ENCODE measurements at regions of chr5 and their contacts with region 1.

Region 1: GRCh38 chr5:170791325-170791954 is 7.9 kb downstream of the GABRP start:
- DNase-seq: peak; percentile 65
- H3K4me3 ChIP-seq: no peak overlapping the region
- H3K27ac ChIP-seq: no peak overlapping the region
- H3K4me1 ChIP-seq: no peaks in the 10 kb centered on the region
- H3K27me3 ChIP-seq: no peaks in the 10 kb centered on the region
- CTCF ChIP-seq: peak; percentile 33 to 69 (median 54)
- EP300 ChIP-seq: no peak
- POLR2A ChIP-seq: no peak

Region 2: GRCh38 chr5:170747851-170748250 is 43.6 kb before region 1 on chr5:
- in situ Hi-C with region 1: loop called in 1 of 4 experiments (anchors 10 kb)
- intact Hi-C with region 1: loop called (anchors 5 kb)
- DNase-seq: no peak
- H3K4me3 ChIP-seq: no peak overlapping the region
- H3K27ac ChIP-seq: no peak overlapping the region
- H3K4me1 ChIP-seq: peaks cover 10 to 47% (median 18%) of the 10 kb centered on the region in 4 donors
- H3K27me3 ChIP-seq: peaks cover 15% of the 10 kb centered on the region
- CTCF ChIP-seq: peak in 1 of 5 experiments; percentile 21
- EP300 ChIP-seq: no peak
- POLR2A ChIP-seq: no peak

Region 3: DNA sequence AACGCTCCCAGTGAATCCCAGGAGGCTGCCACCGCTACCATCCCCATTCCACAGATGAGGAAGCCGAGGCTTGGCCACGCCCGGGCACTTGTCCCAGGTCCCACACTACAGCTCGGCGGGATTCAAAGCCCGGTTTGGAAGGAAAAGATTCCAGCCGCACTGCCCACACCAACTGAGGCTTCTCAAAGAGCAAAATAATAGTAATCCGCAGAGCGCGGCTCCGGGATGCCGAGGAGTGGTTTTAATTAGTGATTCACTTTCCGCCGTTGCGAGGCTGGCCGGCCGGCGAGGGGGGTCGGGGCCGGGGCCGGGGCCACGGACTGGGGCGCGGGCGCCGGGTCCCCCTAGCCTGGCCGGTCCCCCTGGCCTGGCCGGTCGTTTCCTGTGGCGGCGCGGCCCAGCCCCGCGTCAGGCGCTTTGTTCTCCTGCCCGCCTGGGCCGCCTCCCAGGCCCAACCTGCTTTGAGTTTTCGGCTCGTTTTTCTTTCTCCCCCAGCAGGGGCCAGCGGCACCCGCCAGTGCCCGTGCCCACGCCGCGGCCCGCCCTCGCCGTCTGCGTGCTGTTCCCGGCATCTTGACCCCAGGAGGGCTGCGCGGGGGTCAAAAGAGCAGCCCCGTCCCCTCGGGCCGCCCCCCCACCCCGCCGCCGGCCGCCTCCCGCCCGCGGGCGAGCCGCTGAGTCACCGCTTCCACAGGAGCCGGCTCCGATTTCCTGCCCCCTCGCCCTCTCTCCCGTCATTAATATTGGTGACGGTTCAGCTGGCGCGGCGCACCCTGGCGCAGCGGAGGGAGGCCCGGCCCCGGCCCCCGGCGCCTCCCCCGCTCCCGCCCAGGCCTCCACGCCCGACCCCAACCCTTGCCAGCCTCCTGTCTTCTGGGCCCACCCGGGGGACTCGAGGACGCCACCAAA is 659.2 kb after region 1 on chr5:
- in situ Hi-C with region 1: no loop called
- intact Hi-C with region 1: no loop called
- DNase-seq: peak; percentile 36
- H3K4me3 ChIP-seq: peak overlapping the region; percentile 31 to 55 (median 40)
- H3K27ac ChIP-seq: peak overlapping the region; percentile 63 to 68 (median 66)
- H3K4me1 ChIP-seq: peaks cover 0 to 10% (median 6%) of the 10 kb centered on the region in 4 donors
- H3K27me3 ChIP-seq: peaks cover 16% of the 10 kb centered on the region
- CTCF ChIP-seq: no peak
- EP300 ChIP-seq: no peak
- POLR2A ChIP-seq: no peak

Measured in transverse colon (tissue), 4 donors.